PC-3 (cell line): ENCODE measurements at regions of chr1 and their contacts with region 1.

Region 1: GRCh38 chr1:29235955-29236684 is at the start of gene PTPRU:
- DNase-seq: peak; percentile 80
- ATAC-seq: peak; percentile 52
- H3K4me3 ChIP-seq: peak within 1 kb of the TSS; percentile 90
- H3K27ac ChIP-seq: no peak within 1 kb of the TSS
- H3K4me1 ChIP-seq: peaks cover 24% of the 10 kb centered on the region
- H3K27me3 ChIP-seq: no peaks in the 10 kb centered on the region
- CTCF ChIP-seq: peak; percentile 56
- total RNA-seq, gene PTPRU: 25.7 and 31.4 TPM in 2 replicates

Region 2: DNA sequence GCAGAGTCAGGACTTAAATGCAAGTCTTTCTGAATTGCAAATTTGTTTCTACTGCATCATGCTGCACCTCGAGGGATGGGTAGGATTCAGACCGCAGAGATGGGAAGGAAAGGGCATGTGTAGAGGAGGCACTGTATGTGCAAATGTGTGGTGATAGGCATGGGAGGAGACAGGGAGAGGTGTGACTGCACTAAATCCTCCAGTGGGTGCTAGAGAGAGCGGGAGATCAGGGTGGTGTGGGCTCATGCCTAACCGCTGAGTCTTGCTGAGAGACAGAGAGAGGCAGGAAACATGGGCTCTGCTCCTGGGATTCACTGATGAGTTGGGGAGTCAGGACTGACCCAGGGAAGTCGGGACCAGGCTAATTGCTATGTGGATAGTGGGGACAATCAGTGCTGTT is 61.3 kb after region 1 on chr1:
- CTCF ChIA-PET with region 1: no interaction called
- POLR2A ChIA-PET with region 1: interaction called, 12 read pairs
- intact Hi-C with region 1: no loop called
- DNase-seq: no peak
- ATAC-seq: no peak
- H3K4me3 ChIP-seq: no peak overlapping the region
- H3K27ac ChIP-seq: no peak overlapping the region
- H3K4me1 ChIP-seq: no peaks in the 10 kb centered on the region
- H3K27me3 ChIP-seq: no peaks in the 10 kb centered on the region
- CTCF ChIP-seq: no peak

Region 3: GRCh38 chr1:29569971-29570634 is 334.0 kb after region 1 on chr1:
- CTCF ChIA-PET with region 1: no interaction called
- POLR2A ChIA-PET with region 1: no interaction called
- intact Hi-C with region 1: loop called (anchors 5 kb)
- DNase-seq: peak; percentile 99
- ATAC-seq: peak; percentile 98
- H3K4me3 ChIP-seq: no peak overlapping the region
- H3K27ac ChIP-seq: peak overlapping the region; percentile 96
- H3K4me1 ChIP-seq: peaks cover 31% of the 10 kb centered on the region
- H3K27me3 ChIP-seq: no peaks in the 10 kb centered on the region
- CTCF ChIP-seq: no peak

Region 4: GRCh38 chr1:29849038-29849750 is 613.1 kb after region 1 on chr1:
- CTCF ChIA-PET with region 1: no interaction called
- POLR2A ChIA-PET with region 1: no interaction called
- intact Hi-C with region 1: loop called (anchors 5 kb)
- DNase-seq: peak; percentile 83
- ATAC-seq: peak; percentile 81
- H3K4me3 ChIP-seq: no peak overlapping the region
- H3K27ac ChIP-seq: no peak overlapping the region
- H3K4me1 ChIP-seq: no peaks in the 10 kb centered on the region
- H3K27me3 ChIP-seq: peaks cover 3% of the 10 kb centered on the region; the same call in 1 of the 2 replicates
- CTCF ChIP-seq: peak; percentile 79

Region 5: DNA sequence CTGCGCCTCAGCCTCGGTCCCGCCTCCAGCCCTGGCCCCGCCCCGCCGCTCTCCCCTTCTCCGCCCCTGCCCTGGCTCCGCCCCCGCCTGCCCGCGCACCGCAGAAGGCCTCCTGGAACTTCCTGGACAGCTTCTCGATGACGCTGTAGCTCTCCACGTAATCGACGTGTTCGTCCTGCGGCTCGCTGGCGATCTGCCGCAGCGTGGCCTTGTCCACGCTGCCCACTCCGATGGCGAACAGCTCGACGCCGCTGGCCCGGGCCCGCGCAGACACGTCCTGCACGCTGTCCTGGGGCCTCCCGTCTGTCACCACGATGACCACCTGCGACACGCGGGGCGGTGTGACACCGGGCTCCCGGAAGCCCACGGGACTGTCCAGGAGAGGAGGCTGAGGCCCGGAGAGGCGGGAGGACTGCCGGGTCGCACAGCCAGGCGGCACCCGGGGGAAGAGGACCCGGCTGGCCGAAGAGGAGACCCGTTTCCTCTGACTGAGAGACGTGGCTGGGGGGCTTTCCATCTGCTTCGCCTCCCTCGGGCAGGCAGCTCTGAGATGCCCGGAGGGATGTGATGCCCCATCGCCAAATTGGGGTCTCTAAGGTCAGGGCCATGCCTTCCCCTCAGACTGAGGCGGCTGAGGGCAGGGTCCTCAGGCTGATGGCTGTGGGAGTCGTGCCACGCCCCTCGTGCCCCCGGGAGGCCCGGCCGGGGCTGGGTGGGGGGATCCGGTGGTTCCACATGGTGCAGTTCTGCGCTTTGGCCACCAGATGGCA is 1482.7 kb after region 1 on chr1:
- CTCF ChIA-PET with region 1: no interaction called
- POLR2A ChIA-PET with region 1: no interaction called
- intact Hi-C with region 1: loop called (anchors 5 kb)
- DNase-seq: no peak
- ATAC-seq: peak; percentile 71
- H3K4me3 ChIP-seq: peak overlapping the region; percentile 67
- H3K27ac ChIP-seq: peak overlapping the region; percentile 81
- H3K4me1 ChIP-seq: peaks cover 10% of the 10 kb centered on the region
- H3K27me3 ChIP-seq: no peaks in the 10 kb centered on the region
- CTCF ChIP-seq: peak; percentile 96